ENCODE measurements at regions of chr6 and their contacts with region 1.

Region 1: DNA sequence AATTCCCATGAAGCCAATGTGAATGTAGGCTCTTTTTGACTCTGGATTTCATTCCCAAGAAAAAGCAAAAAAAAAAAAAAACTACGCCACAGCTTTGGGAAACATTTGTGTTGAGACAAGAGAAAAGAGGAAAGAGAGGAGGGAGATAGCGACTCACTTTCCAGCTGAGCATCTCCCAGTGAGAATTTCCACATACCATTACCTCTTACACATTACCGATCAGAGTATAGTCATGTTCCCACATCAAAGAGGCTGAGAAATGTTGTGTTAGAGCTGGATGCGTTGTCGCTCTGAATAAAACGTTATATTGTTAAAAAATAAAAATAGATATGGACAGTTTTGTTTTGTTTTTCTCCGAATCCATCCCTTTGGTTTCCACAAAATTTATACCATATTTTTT is 1019.3 kb upstream of the ADGRB3 start:
- DNase-seq: no peak
- H3K4me3 ChIP-seq: no peak overlapping the region
- H3K27ac ChIP-seq: no peak overlapping the region
- H3K4me1 ChIP-seq: no peaks in the 10 kb centered on the region
- H3K27me3 ChIP-seq: no peaks in the 10 kb centered on the region
- CTCF ChIP-seq: no peak
- POLR2A ChIP-seq: no peak

Region 2: GRCh38 chr6:66210964-66211363 is 1404.8 kb before region 1 on chr6:
- intact Hi-C with region 1: loop called (anchors 5 kb)
- DNase-seq: no peak
- H3K4me3 ChIP-seq: no peak overlapping the region
- H3K27ac ChIP-seq: no peak overlapping the region
- H3K4me1 ChIP-seq: no peaks in the 10 kb centered on the region
- H3K27me3 ChIP-seq: no peaks in the 10 kb centered on the region
- CTCF ChIP-seq: no peak
- POLR2A ChIP-seq: no peak